ENCODE measurements at regions of chr3 and their contacts with region 1.

Region 1: DNA sequence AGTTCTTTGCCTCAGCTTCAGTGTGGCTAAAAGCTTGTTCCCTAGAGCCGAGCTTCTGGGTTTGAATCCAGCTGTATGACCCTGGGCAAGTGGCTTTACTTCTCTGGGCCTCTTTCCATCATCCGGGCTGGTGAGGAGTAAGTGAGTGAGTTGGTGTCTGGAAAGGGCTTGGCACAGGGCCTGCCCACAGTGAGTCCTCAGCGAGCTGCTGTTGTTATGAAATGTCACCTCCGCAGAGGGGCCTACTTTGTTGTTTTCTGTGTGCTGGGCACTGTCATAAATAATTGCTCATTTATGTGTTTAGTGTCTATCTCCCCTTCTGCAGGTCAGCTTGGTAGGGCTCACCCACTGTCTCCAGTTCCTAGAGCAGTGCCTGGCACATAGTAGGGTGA is 31.7 kb downstream of the SLC6A6 start:
- DNase-seq: no peak
- ATAC-seq: peak in 1 of 8 donors; percentile 10
- H3K4me3 ChIP-seq: no peak overlapping the region
- H3K27ac ChIP-seq: peak overlapping the region in 9 of 10 donors; percentile 33 to 95 (median 71)
- H3K4me1 ChIP-seq: peaks cover 30 to 100% (median 85%) of the 10 kb centered on the region in 9 donors
- H3K27me3 ChIP-seq: peaks cover 0 to 22% (median 0%) of the 10 kb centered on the region in 7 donors
- CTCF ChIP-seq: no peak

Region 2: GRCh38 chr3:14377348-14378169 is 56.6 kb before region 1 on chr3:
- intact Hi-C with region 1: no loop called
- DNase-seq: no peak
- ATAC-seq: peak in 4 of 8 donors; percentile 4 to 34 (median 17)
- H3K4me3 ChIP-seq: no peak overlapping the region
- H3K27ac ChIP-seq: peak overlapping the region in 6 of 10 donors; percentile 39 to 82 (median 52)
- H3K4me1 ChIP-seq: peaks cover 4 to 56% (median 26%) of the 10 kb centered on the region in 9 donors
- H3K27me3 ChIP-seq: peaks cover 0 to 10% (median 8%) of the 10 kb centered on the region in 7 donors
- CTCF ChIP-seq: no peak

Region 3: GRCh38 chr3:14452679-14453367 is 18.7 kb after region 1 on chr3:
- intact Hi-C with region 1: loop called in 1 of 10 experiments (anchors 2 kb)
- DNase-seq: peak; percentile 87 to 96
- ATAC-seq: peak; percentile 83 to 95 (median 92)
- H3K4me3 ChIP-seq: no peak overlapping the region
- H3K27ac ChIP-seq: peak overlapping the region; percentile 14 to 87 (median 76)
- H3K4me1 ChIP-seq: peaks cover 27 to 58% (median 38%) of the 10 kb centered on the region in 9 donors
- H3K27me3 ChIP-seq: peaks cover 0 to 42% (median under 1%) of the 10 kb centered on the region in 7 donors
- CTCF ChIP-seq: peak in 6 of 9 donors; percentile 18 to 41 (median 26)

Measured in heart right ventricle (tissue), 16 donors.